Activated naive CD4-positive, alpha-beta T cell treated with anti-CD3 and anti-CD28 coated beads for 36 hours (primary cell): ENCODE measurements at regions of chr2 and their contacts with region 1.

Region 1: GRCh38 chr2:98412751-98413458 is 31.8 kb upstream of the INPP4A start:
- DNase-seq: peak; percentile 70
- H3K4me3 Mint-ChIP-seq: no peak overlapping the region
- H3K27ac Mint-ChIP-seq: no peak overlapping the region
- H3K4me1 Mint-ChIP-seq: peaks cover 17% of the 10 kb centered on the region
- H3K27me3 Mint-ChIP-seq: no peaks in the 10 kb centered on the region

Region 2: DNA sequence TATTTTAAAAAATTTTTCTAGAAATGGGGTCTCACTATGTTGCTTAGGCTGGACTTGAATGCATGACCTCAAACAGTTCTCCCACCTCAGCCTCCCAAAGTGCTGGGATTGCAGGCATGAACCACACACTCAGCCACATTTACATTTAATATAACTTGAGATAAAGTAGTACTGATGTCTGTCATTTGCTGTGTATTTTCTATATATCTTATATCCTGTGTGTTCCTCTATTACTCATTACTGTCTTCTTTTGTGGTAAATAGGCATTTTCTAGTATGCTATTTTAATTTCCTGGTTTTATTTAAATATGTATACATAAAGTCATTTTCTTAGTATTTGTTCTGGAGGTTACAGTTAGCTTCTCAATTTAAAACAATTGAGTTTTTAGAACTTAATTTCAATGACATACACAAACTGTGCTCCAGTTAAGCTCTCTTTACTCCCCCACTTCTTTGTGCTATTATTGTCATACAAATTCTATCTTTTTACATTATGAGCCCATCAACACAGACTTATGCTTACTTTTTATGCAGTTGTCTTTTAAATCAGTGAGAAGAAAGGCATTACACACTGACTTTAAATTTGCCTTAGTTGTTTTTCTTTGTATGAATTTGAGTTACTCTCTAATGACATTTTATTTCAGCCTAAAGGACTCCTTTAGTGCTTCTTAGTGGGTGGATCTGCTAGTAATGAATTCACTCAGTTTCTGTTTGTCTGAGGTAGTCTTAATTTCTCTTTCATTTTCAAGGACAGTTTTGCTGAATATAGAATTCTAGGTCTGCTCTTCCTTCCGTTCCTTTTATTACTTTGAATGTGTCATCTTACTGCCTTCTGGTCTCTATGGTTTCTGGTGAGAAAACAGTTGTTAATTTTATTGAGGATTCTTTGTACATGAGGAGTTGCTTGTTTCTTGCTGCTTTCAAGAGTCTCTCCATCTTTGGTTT is 25.6 kb after region 1 on chr2:
- CTCF ChIA-PET with region 1: interaction called, 5 read pairs
- intact Hi-C with region 1: loop called (anchors 1 kb)
- DNase-seq: no peak
- H3K4me3 Mint-ChIP-seq: no peak overlapping the region
- H3K27ac Mint-ChIP-seq: peak overlapping the region; percentile 73
- H3K4me1 Mint-ChIP-seq: peaks cover 19% of the 10 kb centered on the region
- H3K27me3 Mint-ChIP-seq: no peaks in the 10 kb centered on the region

Region 3: DNA sequence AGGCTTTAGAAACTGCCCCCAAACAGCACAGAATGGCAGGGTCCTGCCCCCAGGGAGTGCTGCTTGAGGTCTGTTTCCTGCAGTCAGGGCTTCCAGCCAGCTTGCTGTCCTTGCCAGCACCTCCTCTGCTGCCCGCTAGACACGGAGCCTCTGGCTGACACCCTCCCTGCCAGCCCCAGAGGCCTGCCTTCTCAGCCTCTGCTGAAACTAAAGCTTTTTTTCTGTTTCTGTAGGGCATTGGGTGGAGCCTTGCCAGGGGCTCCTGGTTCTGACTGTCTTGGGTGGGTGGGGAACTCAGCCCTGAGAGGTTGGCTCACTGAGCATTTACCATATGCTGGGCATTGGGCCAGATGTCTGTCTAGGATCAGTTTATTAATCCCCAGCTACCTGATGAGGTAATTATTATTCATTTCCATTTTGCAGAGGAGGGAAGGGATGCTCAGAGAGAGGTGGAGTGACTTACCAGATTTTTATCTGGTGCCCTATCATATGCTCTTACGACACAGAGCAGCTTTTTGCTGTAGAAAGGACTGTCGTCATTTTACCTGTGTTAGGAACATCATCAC is 67.1 kb after region 1 on chr2:
- CTCF ChIA-PET with region 1: interaction called, 5 read pairs
- intact Hi-C with region 1: loop called (anchors 1 kb)
- DNase-seq: peak; percentile 70
- H3K4me3 Mint-ChIP-seq: peak overlapping the region; percentile 31
- H3K27ac Mint-ChIP-seq: peak overlapping the region; percentile 66
- H3K4me1 Mint-ChIP-seq: peaks cover 98% of the 10 kb centered on the region
- H3K27me3 Mint-ChIP-seq: no peaks in the 10 kb centered on the region

Region 4: DNA sequence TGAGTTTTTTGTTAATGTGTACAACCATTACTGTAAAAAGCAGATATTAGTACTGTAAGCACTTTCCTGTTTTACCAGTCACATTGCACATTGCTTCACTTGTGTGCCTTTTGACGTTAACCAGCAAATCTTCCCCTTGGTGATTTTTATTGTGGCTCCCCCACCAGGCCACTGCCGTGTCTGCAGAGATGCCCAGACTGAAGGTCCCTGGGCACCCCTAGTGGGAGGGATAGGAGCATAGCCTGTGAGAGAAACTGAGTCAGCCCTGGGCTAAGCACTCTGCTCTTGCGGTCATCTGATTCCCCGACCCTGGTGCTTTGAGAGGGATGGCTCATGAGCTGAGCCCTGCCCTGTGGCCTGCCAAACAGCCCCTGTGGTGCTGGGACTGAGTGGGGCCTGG is 105.2 kb after region 1 on chr2:
- CTCF ChIA-PET with region 1: interaction called, 23 read pairs
- intact Hi-C with region 1: loop called (anchors 1 kb)
- DNase-seq: peak; percentile 78
- H3K4me3 Mint-ChIP-seq: no peak overlapping the region
- H3K27ac Mint-ChIP-seq: no peak overlapping the region
- H3K4me1 Mint-ChIP-seq: peaks cover 47% of the 10 kb centered on the region
- H3K27me3 Mint-ChIP-seq: no peaks in the 10 kb centered on the region

Region 5: DNA sequence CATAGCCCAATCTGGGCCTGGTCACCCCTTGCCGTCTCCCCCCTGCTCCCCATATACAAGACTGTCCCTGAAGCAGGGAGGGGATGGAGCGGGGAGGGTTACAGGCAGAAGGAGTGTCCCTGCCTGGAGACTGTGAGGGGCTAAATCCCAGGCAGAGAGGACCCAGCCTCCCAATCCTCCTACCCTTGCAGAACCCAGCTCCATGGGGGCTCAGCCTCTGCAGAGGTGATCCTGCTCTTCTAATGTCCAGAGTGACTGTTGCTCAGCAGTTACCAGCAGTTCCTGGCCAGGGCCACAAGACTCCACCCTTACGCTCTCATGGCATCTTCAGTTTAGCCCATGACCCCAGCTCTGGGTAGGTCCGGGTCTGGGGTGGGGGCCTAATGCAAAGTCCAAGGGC is 137.3 kb after region 1 on chr2:
- CTCF ChIA-PET with region 1: no interaction called
- intact Hi-C with region 1: loop called (anchors 1 kb)
- DNase-seq: no peak
- H3K4me3 Mint-ChIP-seq: no peak overlapping the region
- H3K27ac Mint-ChIP-seq: no peak overlapping the region
- H3K4me1 Mint-ChIP-seq: peaks cover 59% of the 10 kb centered on the region
- H3K27me3 Mint-ChIP-seq: no peaks in the 10 kb centered on the region

Region 6: GRCh38 chr2:98601532-98602132 is 188.7 kb after region 1 on chr2:
- CTCF ChIA-PET with region 1: interaction called, 8 read pairs
- intact Hi-C with region 1: loop called (anchors 1 kb)
- DNase-seq: no peak
- H3K4me3 Mint-ChIP-seq: no peak overlapping the region
- H3K27ac Mint-ChIP-seq: peak overlapping the region; percentile 36
- H3K4me1 Mint-ChIP-seq: peaks cover 31% of the 10 kb centered on the region
- H3K27me3 Mint-ChIP-seq: no peaks in the 10 kb centered on the region